Activated CD4-positive, alpha-beta T cell treated with anti-CD3 and anti-CD28 coated beads, Interleukin-2, amount 10 ng/mL, durations not matched to agents 24 days and 14 days (primary cell): ENCODE measurements at regions of chr6 and their contacts with region 1.

Region 1: DNA sequence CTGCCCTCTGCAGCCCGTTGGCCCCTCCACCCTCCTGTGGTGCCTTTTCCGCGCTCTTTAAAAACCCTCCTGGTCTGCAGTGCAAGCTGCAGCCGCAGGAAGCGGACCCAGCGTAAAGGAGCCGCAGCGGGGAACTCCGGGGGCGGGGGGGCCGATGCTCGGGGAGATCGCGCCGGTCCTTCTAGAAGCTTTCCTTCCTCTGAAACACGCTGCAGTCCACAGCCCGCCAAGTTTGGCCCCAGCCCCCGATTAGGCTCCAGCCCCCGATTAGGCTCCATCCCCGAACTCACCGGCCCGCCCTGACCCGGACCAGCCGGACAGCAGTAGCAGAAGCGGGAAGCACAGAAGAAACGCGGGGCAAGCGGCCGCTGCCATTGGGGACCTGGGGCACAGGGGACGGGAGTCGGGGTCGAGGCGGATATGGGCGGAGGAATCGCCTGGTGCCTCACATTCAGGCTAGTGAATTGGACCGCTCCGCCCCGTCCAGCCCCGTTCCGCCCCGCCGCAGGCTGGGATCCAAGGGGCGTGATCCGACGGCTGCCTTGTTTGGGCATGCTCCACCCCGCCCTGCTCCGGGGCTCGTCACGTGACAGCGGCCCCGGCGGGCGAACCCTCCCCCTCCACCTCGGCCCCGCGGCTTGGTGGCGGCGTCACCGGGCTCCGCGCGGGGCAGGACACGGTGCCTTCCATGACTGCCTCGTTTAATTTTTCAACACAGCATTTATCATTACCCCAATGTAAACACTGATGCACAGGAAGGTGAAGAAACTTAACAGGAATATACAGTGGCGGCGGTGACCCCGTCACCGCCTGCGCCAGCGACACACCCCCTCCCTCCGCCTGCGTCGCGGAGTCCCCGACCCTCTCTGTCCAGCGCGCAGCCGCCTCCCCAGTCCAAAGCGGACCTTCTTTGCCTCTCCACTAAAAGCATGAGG is 20.3 kb downstream of the RAET1L start:
- DNase-seq: peak; percentile 99
- H3K4me3 Mint-ChIP-seq: peak overlapping the region; percentile 90
- H3K27ac Mint-ChIP-seq: peak overlapping the region; percentile 88
- H3K4me1 Mint-ChIP-seq: peaks cover 56% of the 10 kb centered on the region
- H3K27me3 Mint-ChIP-seq: peaks cover 22% of the 10 kb centered on the region

Region 2: GRCh38 chr6:149717588-149718458 is 287.2 kb before region 1 on chr6 and contains the start of gene LATS1:
- intact Hi-C with region 1: loop called (anchors 10 kb)
- DNase-seq: peak; percentile 98
- H3K4me3 Mint-ChIP-seq: peak within 1 kb of the TSS; percentile 98
- H3K27ac Mint-ChIP-seq: peak within 1 kb of the TSS; percentile 98
- H3K4me1 Mint-ChIP-seq: peaks cover 32% of the 10 kb centered on the region
- H3K27me3 Mint-ChIP-seq: no peaks in the 10 kb centered on the region
- total RNA-seq, gene LATS1: 31.8 and 33.7 TPM in 2 replicates

Region 3: DNA sequence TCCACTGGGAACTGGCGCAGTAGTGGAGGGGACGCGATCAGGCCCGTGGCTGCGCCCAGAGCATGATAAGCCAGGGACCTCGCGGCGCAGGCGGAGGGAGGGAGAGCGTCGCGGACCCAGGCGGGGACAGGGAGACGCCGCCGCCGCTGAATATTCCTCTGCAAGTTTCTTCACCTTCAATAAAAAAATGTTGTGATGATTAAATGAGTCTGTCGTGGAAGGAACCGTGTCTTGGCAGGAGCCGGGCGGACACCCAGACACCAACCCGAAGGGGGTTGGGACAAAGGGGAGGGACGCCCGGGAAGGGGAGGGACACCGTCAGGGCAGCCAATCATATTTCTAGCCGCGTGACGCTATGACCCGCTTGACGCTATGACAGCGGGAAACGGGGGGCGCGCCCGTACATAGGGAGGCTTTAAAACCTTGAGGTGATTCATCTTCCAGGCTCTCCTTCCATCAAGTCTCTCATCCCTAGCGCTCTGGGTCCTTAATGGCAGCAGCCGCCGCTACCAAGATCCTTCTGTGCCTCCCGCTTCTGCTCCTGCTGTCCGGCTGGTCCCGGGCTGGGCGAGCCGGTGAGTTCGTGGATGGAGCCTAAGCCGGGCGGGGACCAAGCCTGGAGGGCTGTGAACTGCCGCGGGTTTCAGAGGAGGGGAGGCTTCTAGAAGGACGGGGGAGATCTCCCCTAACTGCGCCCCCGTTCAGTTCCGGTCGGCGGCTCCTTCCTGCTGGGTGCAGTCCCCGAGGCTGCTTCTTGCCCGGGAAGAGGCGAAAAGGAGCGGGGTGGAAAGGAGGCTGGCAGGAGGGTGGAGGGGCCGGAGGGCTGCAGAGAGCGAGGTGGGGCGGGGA is 63.2 kb before region 1 on chr6 and contains the start of gene ULBP2:
- intact Hi-C with region 1: loop called (anchors 2 kb)
- DNase-seq: peak; percentile 96
- H3K4me3 Mint-ChIP-seq: peak within 1 kb of the TSS; percentile 85
- H3K27ac Mint-ChIP-seq: peak within 1 kb of the TSS; percentile 83
- H3K4me1 Mint-ChIP-seq: peaks cover 32% of the 10 kb centered on the region
- H3K27me3 Mint-ChIP-seq: peaks cover 72% of the 10 kb centered on the region
- total RNA-seq, gene ULBP2: 0.40 and 0.47 TPM in 2 replicates

Region 4: DNA sequence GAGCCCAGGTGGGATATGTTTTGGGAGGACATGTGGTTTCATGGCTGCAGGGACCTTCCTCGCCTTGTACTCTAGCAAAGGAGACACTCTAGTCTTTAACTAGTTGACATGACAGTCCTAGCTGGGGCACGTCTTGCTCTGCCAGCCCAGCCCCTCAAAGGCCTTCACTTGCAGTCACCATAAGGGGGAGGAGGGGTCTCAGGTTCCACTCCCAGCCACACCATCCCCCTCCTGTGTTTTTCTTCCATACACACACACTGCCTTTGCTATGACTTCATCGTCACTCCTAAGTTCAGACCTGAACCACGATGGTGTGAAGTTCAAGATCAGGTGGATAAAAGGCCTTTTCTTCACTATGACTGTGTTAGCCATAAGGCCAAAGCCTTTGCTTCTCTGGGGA is 27.8 kb before region 1 on chr6:
- intact Hi-C with region 1: no loop called
- DNase-seq: no peak
- H3K4me3 Mint-ChIP-seq: no peak overlapping the region
- H3K27ac Mint-ChIP-seq: no peak overlapping the region
- H3K4me1 Mint-ChIP-seq: peaks cover 12% of the 10 kb centered on the region
- H3K27me3 Mint-ChIP-seq: peaks cover 83% of the 10 kb centered on the region

Region 5: GRCh38 chr6:149990618-149991471 is 14.2 kb before region 1 on chr6:
- intact Hi-C with region 1: loop called (anchors 1 kb)
- DNase-seq: peak; percentile 78
- H3K4me3 Mint-ChIP-seq: peak overlapping the region; percentile 87
- H3K27ac Mint-ChIP-seq: peak overlapping the region; percentile 54
- H3K4me1 Mint-ChIP-seq: peaks cover 37% of the 10 kb centered on the region
- H3K27me3 Mint-ChIP-seq: peaks cover 93% of the 10 kb centered on the region